H1 (cell line): ENCODE measurements at regions of chr11 and their contacts with region 1.

Region 1: DNA sequence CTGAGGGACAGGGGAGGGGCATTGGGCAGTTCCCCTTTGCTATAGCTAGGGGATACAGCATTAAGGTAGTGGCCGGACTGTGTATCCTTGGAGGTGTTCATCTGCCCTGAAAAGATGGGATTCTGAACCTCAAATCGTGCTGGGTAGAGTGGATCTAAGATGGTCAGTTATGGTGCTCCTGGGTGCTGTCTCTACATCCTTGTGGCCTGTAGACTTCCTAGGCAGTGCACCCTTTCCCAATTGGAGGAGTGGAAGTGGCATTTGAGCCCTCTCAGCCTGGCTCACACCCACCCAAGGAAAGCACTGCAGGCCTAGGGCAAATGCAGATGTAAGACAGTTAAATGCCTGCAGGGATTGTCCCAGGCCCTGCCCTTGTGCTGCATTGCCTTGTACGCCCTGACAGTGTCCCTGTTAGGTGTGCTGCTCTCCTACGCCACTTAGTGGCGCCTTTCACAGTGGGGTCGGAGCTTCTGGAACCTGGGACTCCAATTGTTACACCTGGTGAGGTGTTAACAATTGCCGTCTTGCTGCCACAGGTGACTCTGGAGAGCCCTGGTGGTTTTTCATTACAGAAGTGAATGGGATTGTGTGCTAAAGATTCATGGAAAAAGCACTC is 35.0 kb downstream of the PPFIBP2 start:
- DNase-seq: peak; percentile 62 to 73
- H3K4me3 ChIP-seq: no peak overlapping the region
- H3K27ac ChIP-seq: no peak overlapping the region
- H3K4me1 ChIP-seq: peaks cover 0 to 7% (median 4%) of the 10 kb centered on the region in 4 experiments; a peak in 4 of 7 replicates
- H3K27me3 ChIP-seq: no peaks in the 10 kb centered on the region
- CTCF ChIP-seq: peak; percentile 94 to 95 (median 94)
- EP300 ChIP-seq: no peak
- POLR2A ChIP-seq: no peak
- RAD21 ChIP-seq: peak; percentile 79 to 83

Region 2: GRCh38 chr11:7381937-7382336 is 166.8 kb before region 1 on chr11:
- CTCF ChIA-PET with region 1: no interaction called
- POLR2A ChIA-PET with region 1: no interaction called
- DNase-seq: no peak
- H3K4me3 ChIP-seq: no peak overlapping the region
- H3K27ac ChIP-seq: no peak overlapping the region
- H3K4me1 ChIP-seq: no peaks in the 10 kb centered on the region
- H3K27me3 ChIP-seq: no peaks in the 10 kb centered on the region
- CTCF ChIP-seq: no peak
- EP300 ChIP-seq: no peak
- POLR2A ChIP-seq: no peak
- RAD21 ChIP-seq: no peak

Region 3: DNA sequence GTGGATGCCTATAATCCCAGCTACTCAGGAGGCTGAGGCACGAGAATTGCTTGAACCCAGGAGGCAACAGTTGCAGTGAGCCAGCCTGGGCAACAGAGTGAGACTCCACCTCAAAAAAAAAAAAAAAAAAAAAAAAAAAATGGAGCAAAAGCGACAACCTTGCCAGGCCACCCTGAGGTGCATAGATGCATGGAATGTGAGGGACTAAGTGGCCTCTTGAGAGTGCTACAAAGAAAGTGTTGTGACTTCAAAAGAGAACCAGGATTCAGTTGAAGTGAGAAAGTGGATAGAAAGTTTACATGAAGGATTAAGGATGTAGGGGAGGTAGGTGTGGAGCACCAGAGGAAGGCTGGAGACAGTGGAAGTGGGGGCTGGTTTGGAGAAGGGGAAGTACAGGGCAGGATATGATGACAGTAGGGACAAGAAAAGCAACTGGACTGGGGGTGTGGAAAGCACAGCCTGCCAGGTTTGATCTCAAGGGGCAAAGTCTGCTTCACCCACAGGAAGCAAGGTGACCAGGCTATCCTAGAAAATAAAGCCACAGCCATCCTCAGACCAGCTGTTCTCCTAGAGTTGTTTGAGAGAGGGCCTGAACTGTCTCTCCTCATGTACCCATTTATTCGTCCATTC is 99.4 kb before region 1 on chr11:
- CTCF ChIA-PET with region 1: interaction called, 11 read pairs
- POLR2A ChIA-PET with region 1: no interaction called
- DNase-seq: no peak
- H3K4me3 ChIP-seq: no peak overlapping the region
- H3K27ac ChIP-seq: no peak overlapping the region
- H3K4me1 ChIP-seq: no peaks in the 10 kb centered on the region; a peak in 1 of 7 replicates
- H3K27me3 ChIP-seq: no peaks in the 10 kb centered on the region
- CTCF ChIP-seq: no peak
- EP300 ChIP-seq: no peak
- POLR2A ChIP-seq: no peak
- RAD21 ChIP-seq: no peak

Region 4: DNA sequence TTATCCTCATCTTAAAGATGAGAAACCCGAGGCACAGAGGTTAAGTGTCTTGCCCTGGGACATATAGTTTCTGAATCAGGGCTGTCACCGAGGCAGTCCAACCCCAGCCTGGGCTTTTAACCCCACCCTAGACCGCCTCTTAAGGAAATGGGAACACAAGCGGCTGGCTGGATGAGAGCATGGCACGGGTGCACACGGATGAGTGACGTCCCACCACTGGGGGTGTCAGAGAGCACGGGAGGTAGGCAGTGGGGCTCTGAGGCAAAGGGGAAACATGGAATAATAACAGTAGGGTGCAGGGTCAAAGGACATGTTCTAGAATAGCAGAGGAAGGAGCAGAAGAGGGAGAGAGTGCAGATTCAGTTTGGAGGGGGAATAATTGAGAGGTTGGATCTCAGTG is 12.7 kb before region 1 on chr11:
- CTCF ChIA-PET with region 1: interaction called, 34 read pairs
- POLR2A ChIA-PET with region 1: interaction called, 3 read pairs
- DNase-seq: peak in 1 of 2 experiments; percentile 56
- H3K4me3 ChIP-seq: no peak overlapping the region
- H3K27ac ChIP-seq: no peak overlapping the region
- H3K4me1 ChIP-seq: no peaks in the 10 kb centered on the region; a peak in 2 of 7 replicates
- H3K27me3 ChIP-seq: no peaks in the 10 kb centered on the region
- CTCF ChIP-seq: peak; percentile 30 to 84 (median 67)
- EP300 ChIP-seq: no peak
- POLR2A ChIP-seq: no peak
- RAD21 ChIP-seq: peak; percentile 22 to 26; a peak in 2 of 4 replicates

Region 5: DNA sequence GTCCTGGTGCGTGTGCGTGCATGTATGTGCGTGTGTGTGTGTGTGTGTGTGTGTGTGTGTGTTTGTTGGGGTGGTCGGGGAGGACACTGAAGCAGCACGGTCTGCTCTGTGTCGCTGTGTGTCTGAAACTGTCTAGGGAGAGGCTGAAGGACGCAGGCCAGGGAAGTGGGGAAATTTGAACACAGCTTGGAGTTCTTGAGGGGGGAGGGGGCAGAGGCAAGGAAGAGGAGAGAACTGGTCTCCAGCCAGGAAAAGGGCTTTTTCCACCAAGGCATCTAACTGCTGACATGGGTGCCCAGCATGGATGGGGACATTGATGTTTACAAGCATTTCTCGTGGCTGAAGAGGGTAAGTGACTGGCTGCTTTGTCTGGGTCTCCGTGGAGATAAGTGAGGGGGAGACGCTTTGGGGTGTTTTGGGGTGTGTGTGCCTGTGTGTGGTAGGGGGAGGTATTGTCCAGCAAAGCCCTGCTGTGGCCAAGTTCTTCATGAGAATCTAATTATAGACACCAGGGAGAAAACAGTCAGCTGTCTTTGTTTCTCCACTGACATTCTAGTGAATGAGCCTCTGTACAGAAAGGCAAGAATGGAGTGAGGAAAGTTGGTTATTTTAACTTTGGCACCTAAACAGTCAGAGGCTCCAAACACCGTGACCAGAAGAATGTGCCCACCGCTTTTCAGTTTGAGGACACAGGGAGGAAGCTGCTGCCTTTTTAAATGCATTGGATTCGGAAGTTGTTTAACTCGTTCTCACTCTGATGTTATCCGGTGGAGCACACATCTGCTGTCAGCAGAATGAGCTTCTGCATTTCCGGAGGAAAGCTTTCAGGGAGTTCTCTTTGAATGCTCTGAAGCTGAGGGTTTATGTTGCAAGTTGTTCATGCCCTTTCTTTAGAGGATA is 28.8 kb after region 1 on chr11:
- CTCF ChIA-PET with region 1: interaction called, 54 read pairs
- POLR2A ChIA-PET with region 1: no interaction called
- DNase-seq: no peak
- H3K4me3 ChIP-seq: no peak overlapping the region
- H3K27ac ChIP-seq: peak overlapping the region; percentile 26; the same call in 1 of the 2 replicates
- H3K4me1 ChIP-seq: peaks cover 24 to 43% (median 33%) of the 10 kb centered on the region in 4 experiments
- H3K27me3 ChIP-seq: no peaks in the 10 kb centered on the region
- CTCF ChIP-seq: no peak
- EP300 ChIP-seq: no peak
- POLR2A ChIP-seq: no peak
- RAD21 ChIP-seq: no peak

Region 6: DNA sequence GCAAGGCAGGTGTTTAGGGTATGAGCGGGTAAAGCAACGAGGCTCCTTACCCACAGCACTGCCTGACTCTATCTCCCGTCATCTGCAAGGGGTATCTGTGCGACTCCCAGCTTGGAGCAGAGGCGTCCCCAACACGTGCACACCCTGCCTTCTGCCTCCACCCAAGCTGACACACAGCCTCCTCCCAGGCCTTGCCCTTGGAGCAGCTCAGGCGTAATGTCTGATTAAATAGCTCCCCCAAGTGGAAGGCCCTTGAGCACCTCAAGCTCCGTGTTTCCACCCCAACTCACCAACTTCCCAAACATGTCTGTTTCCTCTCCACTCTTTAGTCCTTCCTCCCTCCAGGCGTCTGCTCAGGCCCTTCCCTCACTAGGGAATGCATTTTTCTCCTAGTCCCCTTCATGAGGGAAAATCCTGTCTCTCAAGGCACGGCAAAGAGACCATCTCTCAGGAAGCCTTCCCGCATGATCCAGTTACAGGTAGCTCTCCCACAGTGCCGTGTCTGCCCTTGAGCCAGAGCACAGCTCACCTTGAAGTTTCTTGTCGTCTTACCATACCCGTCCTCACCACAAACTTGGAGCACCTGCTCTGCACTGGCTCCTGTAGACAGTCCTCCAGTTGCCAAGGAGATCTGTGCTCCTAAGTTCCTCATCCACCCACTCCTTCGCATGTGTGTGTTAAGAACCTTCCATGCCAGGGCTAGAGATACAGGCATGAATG is 108.7 kb after region 1 on chr11:
- CTCF ChIA-PET with region 1: interaction called, 40 read pairs
- POLR2A ChIA-PET with region 1: no interaction called
- DNase-seq: peak in 1 of 2 experiments; percentile 65
- H3K4me3 ChIP-seq: no peak overlapping the region
- H3K27ac ChIP-seq: no peak overlapping the region
- H3K4me1 ChIP-seq: no peaks in the 10 kb centered on the region
- H3K27me3 ChIP-seq: no peaks in the 10 kb centered on the region
- CTCF ChIP-seq: peak; percentile 74 to 90 (median 89)
- EP300 ChIP-seq: no peak
- POLR2A ChIP-seq: no peak
- RAD21 ChIP-seq: peak; percentile 96 to 97